B cell (primary cell): ENCODE measurements at regions of chr10 and their contacts with region 1.

Region 1: GRCh38 chr10:73979809-73980433 is 18.0 kb upstream of the VCL start:
- DNase-seq: no peak
- ATAC-seq: peak; percentile 21
- H3K4me3 ChIP-seq: no peak overlapping the region
- H3K4me3 Mint-ChIP-seq: no peak overlapping the region
- H3K27ac ChIP-seq: no peak overlapping the region
- H3K27ac Mint-ChIP-seq: peak overlapping the region; percentile 29
- H3K4me1 ChIP-seq: peaks cover 22 to 25% of the 10 kb centered on the region in 2 donors
- H3K4me1 Mint-ChIP-seq: peaks cover 37% of the 10 kb centered on the region
- H3K27me3 ChIP-seq: no peaks in the 10 kb centered on the region
- H3K27me3 Mint-ChIP-seq: no peaks in the 10 kb centered on the region
- CTCF ChIP-seq: no peak

Region 2: GRCh38 chr10:74011770-74012169 is 31.8 kb after region 1 on chr10:
- CTCF ChIA-PET with region 1: no interaction called
- POLR2A ChIA-PET with region 1: no interaction called
- intact Hi-C with region 1: loop called (anchors 5 kb)
- DNase-seq: no peak
- ATAC-seq: no peak
- H3K4me3 ChIP-seq: no peak overlapping the region
- H3K4me3 Mint-ChIP-seq: no peak overlapping the region
- H3K27ac ChIP-seq: no peak overlapping the region
- H3K27ac Mint-ChIP-seq: no peak overlapping the region
- H3K4me1 ChIP-seq: peaks cover 32 to 34% of the 10 kb centered on the region in 2 donors
- H3K4me1 Mint-ChIP-seq: peaks cover 55% of the 10 kb centered on the region
- H3K27me3 ChIP-seq: no peaks in the 10 kb centered on the region
- H3K27me3 Mint-ChIP-seq: no peaks in the 10 kb centered on the region
- CTCF ChIP-seq: no peak

Region 3: DNA sequence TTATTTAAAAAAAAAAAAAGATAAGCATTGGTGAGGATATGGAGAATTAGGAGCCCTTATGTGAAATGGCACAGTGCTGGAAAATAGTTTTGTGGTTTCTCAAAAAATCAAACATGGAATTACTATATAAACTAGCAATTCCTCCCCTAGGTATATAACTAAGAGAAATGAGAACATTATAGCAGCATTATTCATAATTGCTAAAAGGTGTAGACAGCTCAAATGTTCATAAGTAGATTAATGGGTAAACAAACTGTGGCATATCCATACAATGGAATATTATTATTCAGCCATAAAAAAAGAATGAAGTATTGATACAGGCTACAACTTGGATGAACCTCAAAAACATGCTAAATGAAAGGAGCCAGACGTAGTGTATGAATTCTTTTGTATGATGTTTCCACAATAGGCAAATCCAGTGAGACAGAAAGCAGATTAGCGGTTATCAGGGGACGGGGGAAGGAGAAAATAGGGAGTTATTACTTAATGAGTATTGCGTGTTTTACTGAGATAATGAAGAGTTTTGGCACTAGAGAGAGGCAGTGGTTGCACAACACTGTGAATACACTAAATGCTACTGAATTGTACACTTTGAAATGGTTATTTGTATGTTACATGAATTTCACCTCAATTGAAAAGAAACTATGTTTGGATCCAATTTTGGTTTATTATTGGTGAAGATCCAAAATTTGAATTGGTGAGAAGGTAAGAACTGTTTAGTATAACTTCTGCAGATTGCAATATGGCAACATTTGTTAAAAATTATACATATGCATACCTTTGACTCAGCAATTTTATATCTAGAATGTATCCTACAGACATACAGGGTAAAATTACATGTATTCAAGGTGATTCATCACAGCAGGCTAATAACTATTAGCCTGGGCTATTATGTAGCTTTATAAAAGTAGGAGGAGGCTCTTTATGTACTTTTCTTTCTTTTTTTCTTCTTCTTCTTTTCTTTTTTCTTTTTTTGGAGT is 87.7 kb after region 1 on chr10:
- CTCF ChIA-PET with region 1: no interaction called
- POLR2A ChIA-PET with region 1: no interaction called
- intact Hi-C with region 1: no loop called
- DNase-seq: no peak
- ATAC-seq: no peak
- H3K4me3 ChIP-seq: no peak overlapping the region
- H3K4me3 Mint-ChIP-seq: no peak overlapping the region
- H3K27ac ChIP-seq: no peak overlapping the region
- H3K27ac Mint-ChIP-seq: no peak overlapping the region
- H3K4me1 ChIP-seq: no peaks in the 10 kb centered on the region
- H3K4me1 Mint-ChIP-seq: no peaks in the 10 kb centered on the region
- H3K27me3 ChIP-seq: no peaks in the 10 kb centered on the region
- H3K27me3 Mint-ChIP-seq: no peaks in the 10 kb centered on the region
- CTCF ChIP-seq: no peak

Region 4: DNA sequence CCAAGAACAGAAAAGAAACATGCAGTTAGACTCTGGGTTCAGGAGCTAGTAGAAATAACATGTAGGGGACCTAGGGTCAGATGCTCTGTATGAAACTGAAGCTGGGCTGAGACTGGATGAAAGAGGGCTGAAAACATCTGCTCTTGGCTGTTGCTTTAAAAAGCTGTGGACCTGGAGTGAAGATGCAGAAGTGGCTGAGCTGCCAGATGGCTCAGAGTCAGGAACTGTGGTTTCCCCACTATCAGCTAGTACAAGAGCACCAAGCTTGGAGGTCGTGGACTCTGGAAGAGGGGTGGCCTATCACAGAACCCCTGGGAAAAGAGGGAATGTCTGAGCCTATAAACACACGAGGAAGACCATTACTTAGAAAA is 177.0 kb after region 1 on chr10:
- CTCF ChIA-PET with region 1: no interaction called
- POLR2A ChIA-PET with region 1: interaction called, 13 read pairs
- intact Hi-C with region 1: no loop called
- DNase-seq: peak; percentile 29
- ATAC-seq: peak; percentile 54
- H3K4me3 ChIP-seq: no peak overlapping the region
- H3K4me3 Mint-ChIP-seq: peak overlapping the region; percentile 44
- H3K27ac ChIP-seq: peak overlapping the region in 1 of 2 donors; percentile 74
- H3K27ac Mint-ChIP-seq: peak overlapping the region; percentile 72
- H3K4me1 ChIP-seq: peaks cover 53 to 62% of the 10 kb centered on the region in 2 donors
- H3K4me1 Mint-ChIP-seq: peaks cover 77% of the 10 kb centered on the region
- H3K27me3 ChIP-seq: no peaks in the 10 kb centered on the region
- H3K27me3 Mint-ChIP-seq: no peaks in the 10 kb centered on the region
- CTCF ChIP-seq: no peak